Caco-2 (cell line): ENCODE measurements at regions of chr6 and their contacts with region 1.

Region 1: GRCh38 chr6:90103056-90103800 is 193.4 kb downstream of the BACH2 start:
- DNase-seq: no peak
- H3K4me3 ChIP-seq: no peak overlapping the region
- H3K4me3 Mint-ChIP-seq: no peak overlapping the region
- H3K27ac Mint-ChIP-seq: no peak overlapping the region
- H3K4me1 ChIP-seq: no peaks in the 10 kb centered on the region
- H3K4me1 Mint-ChIP-seq: peaks cover 5% of the 10 kb centered on the region
- H3K27me3 ChIP-seq: no peaks in the 10 kb centered on the region
- H3K27me3 Mint-ChIP-seq: peaks cover 3% of the 10 kb centered on the region
- CTCF ChIP-seq: no peak

Region 2: GRCh38 chr6:90168693-90169131 is 65.5 kb after region 1 on chr6:
- CTCF ChIA-PET with region 1: no interaction called
- POLR2A ChIA-PET with region 1: no interaction called
- intact Hi-C with region 1: loop called (anchors 5 kb)
- DNase-seq: no peak
- H3K4me3 ChIP-seq: no peak overlapping the region
- H3K4me3 Mint-ChIP-seq: no peak overlapping the region
- H3K27ac Mint-ChIP-seq: no peak overlapping the region
- H3K4me1 ChIP-seq: peaks cover 3% of the 10 kb centered on the region; the same call in 1 of the 2 replicates
- H3K4me1 Mint-ChIP-seq: no peaks in the 10 kb centered on the region
- H3K27me3 ChIP-seq: no peaks in the 10 kb centered on the region
- H3K27me3 Mint-ChIP-seq: no peaks in the 10 kb centered on the region
- CTCF ChIP-seq: no peak